Naive thymus-derived CD4-positive, alpha-beta T cell (primary cell): ENCODE measurements at regions of chr6 and their contacts with region 1.

Region 1: DNA sequence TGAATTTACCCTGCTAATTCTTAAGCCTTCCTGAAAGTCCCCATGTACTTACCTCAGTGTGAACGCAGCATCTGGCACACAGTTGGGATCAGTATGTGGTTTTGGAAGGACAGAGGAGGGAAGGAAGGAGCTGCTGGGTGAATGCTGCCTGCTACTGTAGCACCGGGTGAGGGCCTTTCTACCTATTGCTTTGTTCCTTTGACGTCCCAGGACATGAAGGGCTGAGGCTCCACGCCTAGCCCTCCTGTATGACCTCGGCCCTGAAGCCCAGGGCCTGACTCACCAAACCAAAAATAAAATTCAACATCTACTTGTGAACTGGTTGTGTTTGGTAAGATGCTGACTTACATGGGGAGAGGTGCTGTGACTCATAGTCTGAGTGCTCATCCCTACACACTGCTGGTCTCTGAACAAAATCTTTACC is 51.1 kb downstream of the ARID1B start:
- DNase-seq: no peak
- ATAC-seq: peak; percentile 40
- H3K4me3 ChIP-seq: no peak overlapping the region
- H3K4me3 Mint-ChIP-seq: peak overlapping the region in 1 of 10 donors; percentile 18
- H3K27ac ChIP-seq: no peak overlapping the region
- H3K27ac Mint-ChIP-seq: peak overlapping the region in 1 of 9 donors; percentile 12
- H3K4me1 ChIP-seq: peaks cover 11 to 23% of the 10 kb centered on the region in 2 donors
- H3K4me1 Mint-ChIP-seq: peaks cover 28 to 91% (median 83%) of the 10 kb centered on the region in 7 donors
- H3K27me3 ChIP-seq: no peaks in the 10 kb centered on the region
- H3K27me3 Mint-ChIP-seq: no peaks in the 10 kb centered on the region

Region 2: DNA sequence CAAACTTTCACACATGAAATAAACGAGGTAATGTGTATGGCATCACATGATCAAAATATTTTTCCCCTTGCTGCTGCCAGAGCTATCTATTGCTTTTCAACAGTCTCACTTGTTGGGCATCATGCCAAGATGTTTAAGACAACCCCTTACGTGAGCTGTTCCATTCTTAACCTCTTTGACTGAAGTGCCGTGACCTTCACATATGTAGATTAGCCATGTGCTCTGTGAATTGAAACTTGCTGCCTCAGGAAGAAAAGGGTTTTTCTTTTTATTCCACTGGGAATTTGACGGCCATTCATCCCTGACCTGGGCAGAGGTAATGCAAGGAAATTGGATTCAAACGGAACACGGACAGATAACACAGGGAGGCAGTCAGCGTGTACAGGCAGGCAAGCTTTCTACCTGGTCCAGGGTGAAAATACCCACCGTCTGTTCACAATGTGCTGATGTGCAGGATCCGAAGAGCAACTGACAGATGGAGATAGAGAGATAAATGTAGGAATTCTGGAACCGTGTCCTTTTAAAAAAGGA is 36.9 kb before region 1 on chr6:
- CTCF ChIA-PET with region 1: no interaction called
- POLR2A ChIA-PET with region 1: interaction called, 3 read pairs
- intact Hi-C with region 1: loop called in 1 of 2 experiments (anchors 5 kb)
- DNase-seq: peak in 7 of 9 donors; percentile 48 to 84 (median 69)
- ATAC-seq: peak; percentile 81
- H3K4me3 ChIP-seq: no peak overlapping the region
- H3K4me3 Mint-ChIP-seq: peak overlapping the region in 9 of 10 donors; percentile 42 to 76 (median 55)
- H3K27ac ChIP-seq: no peak overlapping the region
- H3K27ac Mint-ChIP-seq: peak overlapping the region in 8 of 9 donors; percentile 3 to 82 (median 62)
- H3K4me1 ChIP-seq: peaks cover 27 to 55% of the 10 kb centered on the region in 2 donors
- H3K4me1 Mint-ChIP-seq: peaks cover 51 to 99% (median 94%) of the 10 kb centered on the region in 7 donors
- H3K27me3 ChIP-seq: no peaks in the 10 kb centered on the region
- H3K27me3 Mint-ChIP-seq: no peaks in the 10 kb centered on the region

Region 3: GRCh38 chr6:157281570-157281969 is 453.3 kb after region 1 on chr6:
- CTCF ChIA-PET with region 1: no interaction called
- POLR2A ChIA-PET with region 1: no interaction called
- intact Hi-C with region 1: no loop called
- DNase-seq: no peak
- ATAC-seq: peak; percentile 79
- H3K4me3 ChIP-seq: no peak overlapping the region
- H3K4me3 Mint-ChIP-seq: no peak overlapping the region
- H3K27ac ChIP-seq: no peak overlapping the region
- H3K27ac Mint-ChIP-seq: no peak overlapping the region
- H3K4me1 ChIP-seq: no peaks in the 10 kb centered on the region
- H3K4me1 Mint-ChIP-seq: peaks cover 0 to 4% (median 0%) of the 10 kb centered on the region in 7 donors
- H3K27me3 ChIP-seq: no peaks in the 10 kb centered on the region
- H3K27me3 Mint-ChIP-seq: peaks cover 0 to 15% (median 0%) of the 10 kb centered on the region in 5 donors

Region 4: DNA sequence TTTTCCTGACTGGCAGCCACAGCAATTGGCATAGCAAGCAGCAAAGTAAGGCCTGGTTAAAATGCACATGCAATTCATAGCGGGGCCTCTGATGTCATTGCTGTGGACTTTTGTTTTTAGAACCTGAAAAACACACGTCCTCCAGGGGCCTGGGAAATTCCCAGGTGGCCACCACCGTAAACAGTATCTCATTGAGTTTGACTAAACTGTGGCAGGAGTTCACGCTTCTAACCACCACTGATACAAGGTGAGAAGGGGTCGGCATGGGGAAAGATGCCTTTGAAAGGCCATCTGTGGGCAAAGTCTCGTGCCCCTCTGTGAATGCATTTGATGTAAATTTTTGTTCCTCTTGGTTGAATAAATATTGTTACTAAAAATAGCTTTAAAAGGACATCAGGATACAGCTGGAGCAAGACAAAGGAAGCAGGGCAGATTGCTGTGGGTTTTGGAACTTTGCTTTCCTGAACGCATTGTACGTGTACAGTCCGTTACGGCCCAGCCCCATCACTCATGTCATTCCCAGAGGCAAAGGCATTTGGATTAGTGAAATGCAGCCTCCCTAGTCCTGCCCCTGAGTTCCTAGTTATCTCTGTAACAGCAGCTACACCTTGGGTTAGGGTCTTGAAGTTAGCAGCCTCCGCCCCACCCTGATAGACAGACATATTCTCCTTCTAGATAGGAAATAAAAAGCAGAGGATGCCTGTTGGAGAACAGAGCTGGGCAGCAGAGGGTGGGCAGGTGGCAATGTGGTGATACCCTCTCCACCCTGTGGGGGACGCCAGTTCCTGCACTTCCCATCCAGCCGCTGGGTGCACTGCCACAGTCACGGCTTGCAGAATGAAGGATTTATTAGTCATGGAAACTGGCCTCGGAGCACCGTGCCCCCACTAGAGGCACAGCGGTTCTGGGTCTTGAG is 633.0 kb after region 1 on chr6:
- CTCF ChIA-PET with region 1: no interaction called
- POLR2A ChIA-PET with region 1: no interaction called
- intact Hi-C with region 1: no loop called
- DNase-seq: peak in 2 of 9 donors; percentile 2 to 72
- ATAC-seq: peak; percentile 71
- H3K4me3 ChIP-seq: no peak overlapping the region
- H3K4me3 Mint-ChIP-seq: peak overlapping the region in 1 of 10 donors; percentile 61
- H3K27ac ChIP-seq: no peak overlapping the region
- H3K27ac Mint-ChIP-seq: peak overlapping the region in 1 of 9 donors; percentile 88
- H3K4me1 ChIP-seq: peaks cover 3 to 10% of the 10 kb centered on the region in 2 donors
- H3K4me1 Mint-ChIP-seq: peaks cover 4 to 67% (median 5%) of the 10 kb centered on the region in 7 donors
- H3K27me3 ChIP-seq: no peaks in the 10 kb centered on the region
- H3K27me3 Mint-ChIP-seq: no peaks in the 10 kb centered on the region